Heart left ventricle (tissue), 16 donors: ENCODE measurements at regions of chr9 and their contacts with region 1.

Region 1: GRCh38 chr9:20319641-20320337 is 302.5 kb downstream of the MLLT3 start:
- DNase-seq: no peak
- ATAC-seq: peak in 2 of 4 donors; percentile 65 to 83
- H3K4me3 ChIP-seq: no peak overlapping the region
- H3K27ac ChIP-seq: peak overlapping the region in 1 of 12 donors; percentile 61
- H3K4me1 ChIP-seq: peaks cover 0 to 19% (median 0%) of the 10 kb centered on the region in 12 donors
- H3K27me3 ChIP-seq: no peaks in the 10 kb centered on the region
- CTCF ChIP-seq: no peak
- POLR2A ChIP-seq: no peak

Region 2: DNA sequence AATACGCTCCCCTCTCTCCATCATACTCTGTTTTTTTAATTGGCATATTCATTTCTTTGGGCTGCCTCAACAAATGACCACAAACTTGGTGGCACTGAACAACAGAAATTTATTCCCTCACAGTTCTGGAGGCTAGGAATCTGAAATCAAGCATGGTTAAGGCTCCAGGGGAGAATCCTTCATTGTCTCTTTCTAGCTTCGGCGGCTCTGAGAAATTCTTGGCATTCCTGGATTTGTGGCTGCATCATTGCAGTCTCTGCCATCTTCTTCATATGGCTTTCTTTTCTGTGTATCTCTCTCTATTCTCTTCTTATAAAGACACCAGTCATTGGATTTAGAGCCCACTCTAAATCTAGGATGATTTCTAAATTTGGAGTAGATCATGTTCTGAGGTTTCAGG is 520.0 kb before region 1 on chr9:
- intact Hi-C with region 1: loop called in 1 of 10 experiments (anchors 10 kb)
- DNase-seq: no peak
- ATAC-seq: no peak
- H3K4me3 ChIP-seq: no peak overlapping the region
- H3K27ac ChIP-seq: no peak overlapping the region
- H3K4me1 ChIP-seq: no peaks in the 10 kb centered on the region
- H3K27me3 ChIP-seq: peaks cover 0 to 2% (median 0%) of the 10 kb centered on the region in 9 donors
- CTCF ChIP-seq: no peak
- POLR2A ChIP-seq: no peak

Region 3: DNA sequence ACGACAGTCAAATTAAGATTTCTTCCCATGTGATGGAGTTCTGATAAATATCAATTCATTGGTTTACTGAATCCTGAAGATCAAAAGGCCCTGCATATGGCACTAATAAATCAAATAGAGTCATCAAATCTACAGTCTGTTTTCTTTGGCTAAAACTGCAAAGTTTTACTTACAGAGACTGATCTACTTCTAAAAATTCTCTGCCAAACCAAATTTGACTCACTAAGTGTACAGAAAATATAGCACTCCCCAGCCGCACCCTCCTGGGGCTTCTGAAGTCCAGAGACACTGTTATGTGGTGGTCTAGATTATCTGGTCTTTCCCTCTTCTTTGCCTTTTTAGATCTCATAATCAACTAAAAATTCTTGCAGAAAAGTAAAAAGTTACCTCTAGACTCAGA is 64.9 kb after region 1 on chr9:
- intact Hi-C with region 1: no loop called
- DNase-seq: no peak
- ATAC-seq: no peak
- H3K4me3 ChIP-seq: no peak overlapping the region
- H3K27ac ChIP-seq: no peak overlapping the region
- H3K4me1 ChIP-seq: peaks cover 0 to 10% (median 0%) of the 10 kb centered on the region in 12 donors
- H3K27me3 ChIP-seq: no peaks in the 10 kb centered on the region
- CTCF ChIP-seq: no peak
- POLR2A ChIP-seq: no peak

Region 4: DNA sequence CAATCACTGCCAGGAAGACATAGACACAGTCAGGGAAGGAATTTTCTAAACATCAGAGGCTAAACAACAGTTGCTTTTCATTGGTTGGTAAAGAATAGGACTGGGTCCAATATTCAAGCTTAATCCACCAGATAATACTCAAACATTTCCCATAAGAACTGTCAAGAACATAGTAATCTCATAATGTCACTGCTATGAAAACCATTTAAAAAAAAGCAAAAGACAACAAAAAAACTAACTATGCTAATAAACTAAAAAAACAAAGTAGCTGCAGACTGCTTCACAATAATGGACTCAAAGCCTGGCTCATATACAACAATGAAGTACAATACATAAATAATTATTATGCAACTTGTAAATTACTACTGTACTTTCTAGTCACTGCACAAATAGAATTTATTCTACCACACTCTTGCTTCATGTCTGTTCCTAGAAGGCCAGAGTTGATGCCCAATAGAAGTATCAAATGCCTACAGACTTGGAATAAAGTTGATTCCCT is 153.8 kb after region 1 on chr9:
- intact Hi-C with region 1: no loop called
- DNase-seq: no peak
- ATAC-seq: no peak
- H3K4me3 ChIP-seq: no peak overlapping the region
- H3K27ac ChIP-seq: no peak overlapping the region
- H3K4me1 ChIP-seq: peaks cover 0 to 60% (median 36%) of the 10 kb centered on the region in 12 donors
- H3K27me3 ChIP-seq: no peaks in the 10 kb centered on the region
- CTCF ChIP-seq: no peak
- POLR2A ChIP-seq: no peak

Region 5: DNA sequence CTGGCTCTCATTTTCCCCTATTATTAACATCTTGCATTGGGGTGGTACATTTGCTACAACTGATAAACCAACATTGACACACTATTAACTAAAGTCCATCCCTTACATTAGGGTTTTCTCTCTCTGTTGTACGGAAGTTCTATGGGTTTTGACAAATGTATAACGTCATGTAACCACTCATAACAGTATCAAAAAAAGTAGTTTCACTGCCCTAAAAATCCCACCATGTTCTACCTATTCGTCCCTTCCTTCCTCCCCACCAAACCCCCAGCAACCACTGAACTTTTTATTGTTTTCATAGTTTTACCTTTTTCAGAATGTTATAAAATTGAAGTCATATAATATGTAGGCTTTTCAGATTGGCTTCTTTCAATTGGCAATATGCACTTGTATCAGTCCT is 262.4 kb after region 1 on chr9:
- intact Hi-C with region 1: no loop called
- DNase-seq: no peak
- ATAC-seq: no peak
- H3K4me3 ChIP-seq: no peak overlapping the region
- H3K27ac ChIP-seq: no peak overlapping the region
- H3K4me1 ChIP-seq: no peaks in the 10 kb centered on the region
- H3K27me3 ChIP-seq: no peaks in the 10 kb centered on the region
- CTCF ChIP-seq: no peak
- POLR2A ChIP-seq: no peak

Region 6: GRCh38 chr9:20921362-20921761 is 601.6 kb after region 1 on chr9:
- intact Hi-C with region 1: no loop called
- DNase-seq: no peak
- ATAC-seq: no peak
- H3K4me3 ChIP-seq: no peak overlapping the region
- H3K27ac ChIP-seq: no peak overlapping the region
- H3K4me1 ChIP-seq: no peaks in the 10 kb centered on the region
- H3K27me3 ChIP-seq: no peaks in the 10 kb centered on the region
- CTCF ChIP-seq: no peak
- POLR2A ChIP-seq: no peak